HepG2 (cell line): ENCODE measurements at regions of chr4 and their contacts with region 1.

Region 1: DNA sequence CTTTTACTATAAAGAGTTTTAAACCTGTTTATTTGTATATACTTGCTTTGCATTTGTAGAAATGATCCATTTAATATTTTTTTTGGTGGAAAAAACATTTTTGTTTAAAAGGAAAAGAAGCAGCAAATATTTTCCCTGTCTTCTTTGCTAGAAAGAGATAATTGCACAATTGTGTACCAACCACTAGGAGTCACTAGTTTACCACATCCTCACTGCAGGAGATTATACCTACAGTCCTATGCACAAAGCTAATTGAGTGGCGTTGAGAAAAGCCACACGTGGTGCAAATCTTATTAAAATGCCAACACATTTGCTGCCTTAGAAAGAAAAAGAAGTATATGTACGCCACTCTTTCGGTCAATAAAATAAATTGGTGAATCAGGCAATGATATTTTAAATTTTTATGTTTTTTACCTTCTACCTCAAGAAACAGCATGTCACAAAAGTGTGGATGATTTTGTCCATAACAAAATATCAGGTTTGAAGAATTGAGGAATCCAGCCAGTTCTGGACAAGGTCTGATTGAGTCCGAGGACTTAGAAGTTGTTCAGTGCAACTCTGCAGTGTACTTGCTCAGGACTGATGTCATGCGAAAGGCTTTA is 102.9 kb downstream of the GRXCR1 start:
- DNase-seq: peak; percentile 12
- ATAC-seq: peak; percentile 78
- H3K4me3 ChIP-seq: no peak overlapping the region
- H3K27ac ChIP-seq: no peak overlapping the region
- H3K4me1 ChIP-seq: no peaks in the 10 kb centered on the region
- H3K27me3 ChIP-seq: no peaks in the 10 kb centered on the region
- CTCF ChIP-seq: peak; percentile 75
- EP300 ChIP-seq: no peak
- POLR2A ChIP-seq: no peak
- RAD21 ChIP-seq: peak; percentile 50; the same call in 1 of the 2 replicates

Region 2: GRCh38 chr4:44425614-44426208 is 1430.3 kb after region 1 on chr4:
- CTCF ChIA-PET with region 1: no interaction called
- POLR2A ChIA-PET with region 1: no interaction called
- in situ Hi-C with region 1: no loop called
- intact Hi-C with region 1: loop called (anchors 2 kb)
- DNase-seq: no peak
- ATAC-seq: peak; percentile 47; the same call in 2 of the 3 replicates
- H3K4me3 ChIP-seq: no peak overlapping the region
- H3K27ac ChIP-seq: no peak overlapping the region
- H3K4me1 ChIP-seq: no peaks in the 10 kb centered on the region
- H3K27me3 ChIP-seq: no peaks in the 10 kb centered on the region
- CTCF ChIP-seq: peak; percentile 28; the same call in 1 of the 2 replicates
- EP300 ChIP-seq: no peak
- POLR2A ChIP-seq: no peak
- RAD21 ChIP-seq: no peak

Region 3: GRCh38 chr4:44493924-44494323 is 1498.5 kb after region 1 on chr4:
- CTCF ChIA-PET with region 1: interaction called, 3 read pairs
- POLR2A ChIA-PET with region 1: no interaction called
- in situ Hi-C with region 1: no loop called
- intact Hi-C with region 1: loop called (anchors 1 kb)
- DNase-seq: peak; percentile 20
- ATAC-seq: peak; percentile 82
- H3K4me3 ChIP-seq: no peak overlapping the region
- H3K27ac ChIP-seq: no peak overlapping the region
- H3K4me1 ChIP-seq: no peaks in the 10 kb centered on the region
- H3K27me3 ChIP-seq: no peaks in the 10 kb centered on the region
- CTCF ChIP-seq: peak; percentile 20; the same call in 1 of the 2 replicates
- EP300 ChIP-seq: no peak
- POLR2A ChIP-seq: no peak
- RAD21 ChIP-seq: no peak

Region 4: DNA sequence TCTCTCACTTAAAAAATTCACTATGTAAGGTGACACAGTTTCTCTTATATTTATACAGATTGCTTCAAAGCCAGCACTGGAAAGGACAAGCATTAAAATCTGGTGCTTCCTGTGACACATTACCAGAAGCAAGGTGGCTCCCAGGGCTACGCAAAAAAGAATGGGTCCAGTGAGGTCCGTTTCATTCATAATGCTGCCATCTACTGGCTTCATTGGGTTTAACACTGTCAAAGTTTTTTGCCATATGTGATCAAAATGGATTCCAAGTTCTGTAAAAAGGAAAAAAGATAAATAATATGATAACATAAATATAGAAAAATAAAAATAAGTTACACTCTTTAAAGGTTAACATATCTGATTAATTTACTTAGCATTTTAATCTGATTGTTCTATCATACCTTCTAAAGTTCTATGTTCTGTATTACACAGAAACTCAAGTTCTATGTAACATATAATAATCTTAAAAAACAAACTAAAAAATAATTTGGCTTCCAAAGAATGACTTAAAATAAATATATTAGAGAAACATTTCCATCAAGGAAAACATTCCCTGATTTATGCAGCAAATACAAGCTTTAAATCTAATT is 1633.9 kb after region 1 on chr4:
- CTCF ChIA-PET with region 1: no interaction called
- POLR2A ChIA-PET with region 1: no interaction called
- in situ Hi-C with region 1: loop called (anchors 25 kb)
- intact Hi-C with region 1: loop called (anchors 2 kb)
- DNase-seq: peak; percentile 41
- ATAC-seq: peak; percentile 85
- H3K4me3 ChIP-seq: no peak overlapping the region
- H3K27ac ChIP-seq: no peak overlapping the region
- H3K4me1 ChIP-seq: no peaks in the 10 kb centered on the region
- H3K27me3 ChIP-seq: no peaks in the 10 kb centered on the region
- CTCF ChIP-seq: peak; percentile 69
- EP300 ChIP-seq: no peak
- POLR2A ChIP-seq: no peak
- RAD21 ChIP-seq: no peak